ENCODE measurements at regions of chr1 and their contacts with region 1.

Region 1: DNA sequence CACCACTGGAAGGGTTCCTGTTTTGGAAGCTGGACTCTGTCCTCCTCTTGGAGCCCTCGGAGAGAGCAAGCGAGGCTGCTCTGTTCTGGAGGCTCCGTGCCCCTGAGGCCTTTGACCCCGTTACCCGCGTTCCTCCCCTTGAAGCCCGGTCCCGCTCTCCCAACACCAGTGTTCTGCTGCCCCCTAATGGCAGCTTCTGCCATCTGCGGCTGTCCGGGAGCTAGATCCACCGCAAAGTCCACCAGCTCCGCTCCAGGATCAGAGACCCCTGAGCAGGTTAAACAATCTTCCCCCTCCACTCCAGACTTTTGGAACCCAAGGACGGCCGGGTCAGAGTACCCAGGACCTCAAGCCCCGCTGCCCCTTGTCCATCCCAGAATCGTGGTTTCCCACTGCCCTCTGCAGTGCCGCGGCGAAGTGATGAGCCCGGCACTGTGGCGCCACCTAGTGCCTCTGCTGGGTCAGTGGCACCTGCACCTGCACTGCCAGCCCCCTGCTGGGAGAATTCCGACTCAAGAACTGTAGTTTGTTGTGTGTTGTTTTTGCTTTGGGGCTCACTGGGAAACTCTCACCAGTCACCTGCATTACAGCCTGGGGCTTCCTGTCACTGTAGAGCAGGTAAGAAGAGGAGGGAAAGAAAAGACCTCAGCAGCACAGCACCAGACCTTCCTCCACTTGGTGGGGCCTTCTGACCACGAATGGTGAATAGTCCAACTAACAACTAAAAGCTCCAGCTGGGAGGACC is 63.5 kb upstream of the NFASC start:
- DNase-seq: peak; percentile 73 to 92
- ATAC-seq: peak; percentile 93 to 95 (median 95)
- H3K4me3 ChIP-seq: peak overlapping the region; percentile 35
- H3K4me3 Mint-ChIP-seq: peak overlapping the region; percentile 88
- H3K27ac ChIP-seq: no peak overlapping the region
- H3K27ac Mint-ChIP-seq: peak overlapping the region in 1 of 2 donors; percentile 32
- H3K4me1 ChIP-seq: peaks cover 17% of the 10 kb centered on the region
- H3K4me1 Mint-ChIP-seq: peaks cover 6 to 7% of the 10 kb centered on the region in 2 donors
- H3K27me3 ChIP-seq: no peaks in the 10 kb centered on the region
- H3K27me3 Mint-ChIP-seq: peaks cover 0 to 4% of the 10 kb centered on the region in 2 donors
- CTCF ChIP-seq: peak; percentile 100

Region 2: DNA sequence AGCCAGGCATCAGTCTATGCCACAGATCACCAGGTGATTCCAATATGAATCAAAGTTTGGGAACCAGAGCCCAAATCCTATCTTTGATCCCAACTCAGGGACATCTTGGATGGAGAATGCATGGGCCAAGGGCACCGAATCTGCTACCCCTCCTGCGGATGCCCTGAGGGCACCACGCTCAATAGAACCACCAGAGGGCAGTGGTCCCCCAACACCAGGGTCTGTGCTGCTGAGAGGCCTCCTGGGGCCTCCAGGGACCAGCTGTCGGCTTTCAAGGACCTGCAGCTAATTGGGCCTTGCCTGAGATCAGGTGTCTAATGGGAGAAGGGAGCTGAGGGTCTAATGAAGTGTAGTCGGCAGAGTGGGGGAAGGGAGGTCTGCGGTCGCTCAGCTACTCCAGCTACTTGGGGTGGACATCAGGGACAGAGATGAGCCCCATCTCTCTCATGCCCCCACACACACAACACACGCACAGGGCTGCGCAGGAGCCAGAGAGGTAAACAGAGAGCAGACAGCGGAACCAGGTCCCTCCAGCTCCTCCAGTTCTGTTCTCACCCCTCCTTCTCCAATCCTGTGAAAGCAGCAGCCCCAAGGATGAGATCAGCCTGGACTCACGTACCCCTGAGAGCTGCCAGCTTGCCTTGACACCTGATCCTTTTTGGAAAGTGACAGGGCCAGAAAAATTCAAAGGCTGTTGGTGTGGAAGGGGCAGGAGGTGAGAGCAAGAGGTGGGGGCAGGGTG is 360.6 kb before region 1 on chr1:
- intact Hi-C with region 1: loop called (anchors 2 kb)
- DNase-seq: peak; percentile 65 to 89
- ATAC-seq: peak; percentile 89 to 99 (median 97)
- H3K4me3 ChIP-seq: no peak overlapping the region
- H3K4me3 Mint-ChIP-seq: no peak overlapping the region
- H3K27ac ChIP-seq: no peak overlapping the region
- H3K27ac Mint-ChIP-seq: peak overlapping the region; percentile 76 to 86
- H3K4me1 ChIP-seq: peaks cover 13% of the 10 kb centered on the region
- H3K4me1 Mint-ChIP-seq: peaks cover 4% of the 10 kb centered on the region in 2 donors
- H3K27me3 ChIP-seq: no peaks in the 10 kb centered on the region
- H3K27me3 Mint-ChIP-seq: no peaks in the 10 kb centered on the region
- CTCF ChIP-seq: peak; percentile 74

Region 3: DNA sequence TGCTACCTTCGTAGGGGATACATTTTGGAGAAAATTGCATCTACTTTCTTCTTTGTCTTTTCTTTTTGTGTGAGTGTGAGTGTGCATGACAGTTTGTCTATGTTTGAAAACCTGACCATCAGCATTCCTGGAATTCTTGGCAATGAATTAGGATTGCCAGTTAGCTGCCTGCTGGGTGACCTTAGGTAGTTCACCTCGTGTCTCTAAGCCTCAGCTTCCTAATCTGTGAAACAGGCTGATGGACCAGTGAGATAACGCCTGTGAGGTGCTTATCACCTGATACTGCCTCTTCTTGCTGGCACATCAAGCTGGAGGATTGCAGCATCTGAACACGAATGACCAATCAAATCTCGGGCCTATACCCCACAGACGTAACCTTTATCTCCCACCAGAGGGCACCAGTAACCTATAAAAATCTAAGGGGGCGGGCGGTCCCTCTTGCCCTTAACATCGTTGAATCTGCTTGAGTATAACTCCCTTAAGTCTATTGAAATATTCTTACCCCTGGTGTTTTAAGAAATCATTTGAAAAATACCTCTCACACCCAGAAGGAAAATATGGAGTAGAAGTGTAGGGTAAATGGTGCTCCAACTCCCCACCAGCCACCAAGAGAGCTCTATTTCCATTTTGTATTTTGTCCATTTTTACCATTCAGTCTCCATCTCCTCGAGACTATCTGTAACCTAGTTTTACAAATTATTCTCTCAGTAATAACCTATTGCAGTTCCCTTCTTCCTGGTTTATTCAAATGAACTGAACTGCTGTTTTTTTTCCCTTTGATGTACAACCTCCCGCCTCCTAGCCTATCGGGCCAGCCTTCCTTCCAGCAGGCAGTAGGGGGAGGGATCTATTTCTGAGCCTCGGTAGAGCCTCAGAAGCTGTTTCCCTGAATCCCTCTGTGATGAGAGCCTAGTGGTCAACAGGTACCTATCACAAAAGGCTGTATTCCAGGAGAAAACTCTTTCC is 241.2 kb before region 1 on chr1:
- intact Hi-C with region 1: loop called (anchors 1 kb)
- DNase-seq: peak in 1 of 2 donors; percentile 84
- ATAC-seq: peak; percentile 87 to 97 (median 93)
- H3K4me3 ChIP-seq: no peak overlapping the region
- H3K4me3 Mint-ChIP-seq: no peak overlapping the region
- H3K27ac ChIP-seq: peak overlapping the region; percentile 38
- H3K27ac Mint-ChIP-seq: peak overlapping the region; percentile 33 to 45
- H3K4me1 ChIP-seq: peaks cover 11% of the 10 kb centered on the region
- H3K4me1 Mint-ChIP-seq: peaks cover 32 to 35% of the 10 kb centered on the region in 2 donors
- H3K27me3 ChIP-seq: no peaks in the 10 kb centered on the region
- H3K27me3 Mint-ChIP-seq: no peaks in the 10 kb centered on the region
- CTCF ChIP-seq: peak; percentile 61

Region 4: DNA sequence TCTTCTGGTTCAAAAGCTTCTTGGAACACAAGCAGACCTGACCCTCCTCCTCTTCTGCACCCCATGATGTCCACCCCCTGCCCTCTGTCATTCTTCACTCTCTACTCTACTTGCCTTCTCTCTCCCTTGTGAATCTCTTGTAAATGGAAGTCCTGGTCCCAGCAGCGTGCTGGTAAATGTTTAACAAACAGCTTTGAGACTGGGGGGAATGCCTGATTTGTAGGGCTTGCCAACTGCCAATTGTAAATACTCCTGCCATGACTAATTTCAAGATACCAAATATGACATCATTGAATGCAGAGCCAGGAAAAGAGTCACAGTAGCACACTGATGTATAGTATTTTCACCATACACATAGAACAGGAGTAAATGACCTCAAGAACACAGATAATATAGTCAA is 80.6 kb before region 1 on chr1:
- intact Hi-C with region 1: no loop called
- DNase-seq: no peak
- ATAC-seq: no peak
- H3K4me3 ChIP-seq: no peak overlapping the region
- H3K4me3 Mint-ChIP-seq: no peak overlapping the region
- H3K27ac ChIP-seq: no peak overlapping the region
- H3K27ac Mint-ChIP-seq: no peak overlapping the region
- H3K4me1 ChIP-seq: no peaks in the 10 kb centered on the region
- H3K4me1 Mint-ChIP-seq: peaks cover 16 to 25% of the 10 kb centered on the region in 2 donors
- H3K27me3 ChIP-seq: no peaks in the 10 kb centered on the region
- H3K27me3 Mint-ChIP-seq: peaks cover 6 to 7% of the 10 kb centered on the region in 2 donors
- CTCF ChIP-seq: no peak

Region 5: GRCh38 chr1:204782118-204782700 is 24.9 kb before region 1 on chr1:
- intact Hi-C with region 1: no loop called
- DNase-seq: no peak
- ATAC-seq: no peak
- H3K4me3 ChIP-seq: no peak overlapping the region
- H3K4me3 Mint-ChIP-seq: no peak overlapping the region
- H3K27ac ChIP-seq: no peak overlapping the region
- H3K27ac Mint-ChIP-seq: no peak overlapping the region
- H3K4me1 ChIP-seq: no peaks in the 10 kb centered on the region
- H3K4me1 Mint-ChIP-seq: no peaks in the 10 kb centered on the region
- H3K27me3 ChIP-seq: no peaks in the 10 kb centered on the region
- H3K27me3 Mint-ChIP-seq: peaks cover 14 to 35% of the 10 kb centered on the region in 2 donors
- CTCF ChIP-seq: no peak